Tibial artery (tissue), 4 donors: ENCODE measurements at regions of chr1 and their contacts with region 1.

Region 1: DNA sequence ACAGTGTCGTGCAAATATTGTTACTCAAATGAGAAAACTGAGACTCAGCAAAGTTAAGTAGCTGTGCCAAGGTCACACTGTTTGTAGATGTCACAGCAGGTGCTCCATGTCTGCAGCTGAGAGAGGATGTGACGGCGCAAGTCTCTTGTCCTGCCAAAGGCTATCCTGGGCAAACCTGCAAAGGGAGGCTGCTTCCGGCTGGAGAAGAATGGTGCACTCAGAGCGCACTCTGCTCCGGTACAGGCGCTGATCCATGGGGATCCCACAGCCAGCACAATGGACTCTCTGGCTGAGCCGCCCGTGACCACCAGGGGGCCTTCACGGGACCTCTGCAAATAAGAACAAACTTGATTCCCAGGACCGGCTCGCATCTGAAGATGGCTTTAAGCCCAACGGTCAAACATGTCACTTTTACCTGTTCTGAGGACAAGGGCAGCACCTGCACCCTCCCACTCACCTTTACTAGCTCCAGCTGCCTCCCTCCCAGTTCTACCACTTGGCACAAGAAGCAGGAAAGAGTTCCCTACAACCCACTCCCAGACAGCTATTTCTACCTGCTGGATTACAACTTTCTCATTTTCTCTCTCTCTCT is 21.9 kb downstream of the RD3 start:
- DNase-seq: peak; percentile 82 to 84
- H3K4me3 ChIP-seq: no peak overlapping the region
- H3K27ac ChIP-seq: no peak overlapping the region
- H3K4me1 ChIP-seq: peaks cover 0 to 10% (median 6%) of the 10 kb centered on the region in 4 donors
- H3K27me3 ChIP-seq: no peaks in the 10 kb centered on the region
- CTCF ChIP-seq: peak; percentile 79 to 87

Region 2: GRCh38 chr1:210618369-210618768 is 851.7 kb before region 1 on chr1:
- intact Hi-C with region 1: no loop called
- DNase-seq: no peak
- H3K4me3 ChIP-seq: no peak overlapping the region
- H3K27ac ChIP-seq: no peak overlapping the region
- H3K4me1 ChIP-seq: no peaks in the 10 kb centered on the region
- H3K27me3 ChIP-seq: no peaks in the 10 kb centered on the region
- CTCF ChIP-seq: no peak

Region 3: GRCh38 chr1:211514030-211514754 is 44.2 kb after region 1 on chr1:
- intact Hi-C with region 1: loop called (anchors 5 kb)
- DNase-seq: peak; percentile 80 to 88
- H3K4me3 ChIP-seq: no peak overlapping the region
- H3K27ac ChIP-seq: peak overlapping the region in 1 of 2 donors; percentile 36
- H3K4me1 ChIP-seq: peaks cover 0 to 16% (median 9%) of the 10 kb centered on the region in 4 donors
- H3K27me3 ChIP-seq: no peaks in the 10 kb centered on the region
- CTCF ChIP-seq: peak; percentile 72 to 76